A673 (cell line): ENCODE measurements at regions of chr6 and their contacts with region 1.

Region 1: DNA sequence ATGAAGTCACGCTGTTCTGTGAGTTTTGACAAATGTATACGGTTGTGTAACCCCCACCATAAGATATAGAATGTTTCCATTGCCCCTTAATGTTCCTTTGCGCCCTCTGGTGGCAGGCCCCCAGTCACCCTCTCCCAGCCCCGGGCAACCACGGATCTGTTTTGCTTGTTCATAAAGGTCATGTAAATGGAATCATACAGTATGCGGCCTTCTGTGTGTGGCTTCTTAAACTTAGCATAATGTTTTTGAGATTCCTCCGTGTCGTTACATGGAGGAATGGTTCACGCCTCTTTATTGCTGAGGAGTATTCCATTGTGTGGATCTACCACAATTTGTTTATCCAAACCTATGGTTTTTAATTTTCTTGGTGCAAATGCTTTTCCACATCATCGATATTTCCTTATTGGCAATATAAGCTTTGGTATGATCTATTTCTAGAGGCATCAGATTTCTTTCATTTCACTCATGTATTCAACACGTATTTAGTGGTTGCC is 28.4 kb downstream of the LYRM2 start:
- DNase-seq: peak; percentile 69
- H3K4me3 ChIP-seq: no peak overlapping the region
- H3K27ac ChIP-seq: no peak overlapping the region
- H3K4me1 ChIP-seq: no peaks in the 10 kb centered on the region
- H3K27me3 ChIP-seq: no peaks in the 10 kb centered on the region
- CTCF ChIP-seq: peak; percentile 93

Region 2: DNA sequence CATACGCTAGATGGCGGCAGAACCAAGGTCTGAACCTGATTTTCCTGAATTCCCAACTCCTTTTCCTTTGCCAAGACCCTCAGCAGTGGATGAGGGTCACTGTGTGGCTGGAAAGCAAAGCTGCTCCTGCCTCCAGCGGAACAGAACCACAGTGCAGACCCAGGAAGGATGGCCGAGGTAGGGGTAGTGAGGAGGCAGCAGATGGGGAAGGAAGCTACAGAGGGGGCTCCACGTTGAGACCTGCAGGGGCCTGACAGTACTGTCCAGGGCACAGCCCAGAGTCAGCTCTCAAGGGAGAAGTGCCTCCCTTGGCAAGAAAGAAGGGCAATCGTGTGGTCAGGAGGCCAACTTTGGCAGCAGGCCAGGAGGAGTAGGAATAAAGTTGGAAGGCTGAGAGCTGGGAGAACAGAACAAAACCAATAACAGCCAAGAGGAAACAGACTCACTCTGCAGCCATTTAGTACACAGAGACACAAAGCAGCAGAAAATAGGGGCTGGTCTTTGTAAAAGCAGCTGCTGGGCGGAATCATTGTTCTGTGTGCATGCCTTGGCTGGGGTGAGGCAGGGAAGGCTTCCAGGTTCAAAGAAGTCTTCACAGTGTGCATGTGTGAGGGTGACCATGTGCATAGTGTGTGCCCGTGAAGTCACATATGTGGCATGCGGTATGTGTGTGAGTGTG is 298.2 kb before region 1 on chr6:
- CTCF ChIA-PET with region 1: interaction called, 22 read pairs
- POLR2A ChIA-PET with region 1: no interaction called
- intact Hi-C with region 1: no loop called
- DNase-seq: peak; percentile 25
- H3K4me3 ChIP-seq: no peak overlapping the region
- H3K27ac ChIP-seq: no peak overlapping the region
- H3K4me1 ChIP-seq: peaks cover 23% of the 10 kb centered on the region
- H3K27me3 ChIP-seq: no peaks in the 10 kb centered on the region
- CTCF ChIP-seq: peak; percentile 55

Region 3: GRCh38 chr6:89371849-89372505 is 238.2 kb before region 1 on chr6:
- CTCF ChIA-PET with region 1: interaction called, 3 read pairs
- POLR2A ChIA-PET with region 1: no interaction called
- intact Hi-C with region 1: loop called (anchors 1 kb)
- DNase-seq: peak; percentile 75
- H3K4me3 ChIP-seq: no peak overlapping the region
- H3K27ac ChIP-seq: no peak overlapping the region
- H3K4me1 ChIP-seq: peaks cover 10% of the 10 kb centered on the region
- H3K27me3 ChIP-seq: no peaks in the 10 kb centered on the region
- CTCF ChIP-seq: peak; percentile 99

Region 4: GRCh38 chr6:89432875-89433251 is 177.3 kb before region 1 on chr6 and contains the start of gene ANKRD6:
- CTCF ChIA-PET with region 1: interaction called, 7 read pairs
- POLR2A ChIA-PET with region 1: no interaction called
- intact Hi-C with region 1: loop called (anchors 1 kb)
- DNase-seq: peak; percentile 83
- H3K4me3 ChIP-seq: peak within 1 kb of the TSS; percentile 83
- H3K27ac ChIP-seq: peak within 1 kb of the TSS; percentile 81
- H3K4me1 ChIP-seq: peaks cover 55% of the 10 kb centered on the region
- H3K27me3 ChIP-seq: no peaks in the 10 kb centered on the region
- CTCF ChIP-seq: peak; percentile 70
- total RNA-seq, gene ANKRD6: 25.4 and 36.4 TPM in 2 replicates